Mammary epithelial cell (primary cell): ENCODE measurements at regions of chr20 and their contacts with region 1.

Region 1: DNA sequence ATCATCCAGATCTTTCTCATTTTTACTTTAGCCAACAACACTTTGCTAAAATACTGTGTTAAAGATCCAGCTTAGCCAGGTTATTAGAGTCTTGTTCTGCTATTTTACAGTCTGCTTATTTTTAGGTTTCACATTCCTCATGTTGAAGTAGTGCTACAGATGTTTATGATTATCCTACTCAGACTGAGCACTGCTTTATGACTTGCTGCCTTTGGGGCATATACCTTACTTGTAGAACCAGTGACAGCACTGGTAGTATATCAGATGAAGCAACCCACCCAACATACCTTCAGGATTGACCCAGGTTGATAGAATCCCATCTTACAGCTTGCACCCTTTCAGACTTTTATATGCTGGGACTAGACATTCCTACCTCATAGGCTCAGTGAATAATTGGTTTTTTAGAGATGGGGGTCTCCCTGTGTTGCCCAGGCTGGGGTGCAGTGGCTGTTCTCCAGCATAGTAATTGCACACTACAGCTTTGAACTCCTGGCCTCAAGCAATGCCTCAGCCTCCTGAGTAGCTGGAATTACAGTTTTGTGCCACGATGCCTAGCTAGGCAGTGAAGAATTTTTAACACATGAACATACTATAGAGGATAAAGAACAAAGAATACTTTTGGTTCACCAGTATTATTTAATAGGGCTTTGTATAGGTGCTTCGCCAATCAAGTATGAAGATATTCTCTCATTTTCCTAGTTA is 63.8 kb upstream of the DYNLRB1 start:
- DNase-seq: no peak
- H3K4me3 ChIP-seq: no peak overlapping the region
- H3K27ac ChIP-seq: no peak overlapping the region
- H3K4me1 ChIP-seq: no peaks in the 10 kb centered on the region
- H3K27me3 ChIP-seq: no peaks in the 10 kb centered on the region
- CTCF ChIP-seq: no peak

Region 2: GRCh38 chr20:34363062-34363464 is 89.4 kb before region 1 on chr20 and contains the start of gene ITCH:
- CTCF ChIA-PET with region 1: no interaction called
- dilution Hi-C with region 1: no loop called
- in situ Hi-C with region 1: no loop called
- intact Hi-C with region 1: no loop called
- DNase-seq: peak; percentile 92
- H3K4me3 ChIP-seq: peak within 1 kb of the TSS; percentile 83 to 98 (median 95)
- H3K27ac ChIP-seq: peak within 1 kb of the TSS; percentile 89
- H3K4me1 ChIP-seq: peaks cover 39% of the 10 kb centered on the region
- H3K27me3 ChIP-seq: no peaks in the 10 kb centered on the region
- CTCF ChIP-seq: no peak
- total RNA-seq, gene ITCH: 91.4 to 127 TPM

Region 3: DNA sequence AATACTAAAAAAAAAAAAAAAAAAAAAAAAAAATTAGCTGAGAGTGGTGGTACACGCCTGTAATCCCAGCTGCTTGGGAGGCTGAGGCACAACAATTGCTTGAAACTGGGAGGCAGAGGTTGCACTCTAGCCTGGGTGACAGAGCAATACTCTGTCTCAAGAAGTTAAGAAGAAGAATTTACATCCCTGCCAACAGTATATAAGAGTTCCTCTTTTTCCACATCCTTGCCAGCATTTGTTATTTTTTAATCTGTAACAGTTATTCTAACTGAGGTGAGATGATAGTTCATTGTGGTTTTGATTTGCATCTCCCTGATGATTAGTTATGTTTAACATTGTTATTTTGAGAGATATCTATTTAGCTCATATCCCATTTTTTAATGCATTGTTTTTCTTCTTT is 43.5 kb after region 1 on chr20:
- CTCF ChIA-PET with region 1: no interaction called
- dilution Hi-C with region 1: loop called (anchors 5 kb)
- in situ Hi-C with region 1: no loop called
- intact Hi-C with region 1: loop called (anchors 5 kb)
- DNase-seq: no peak
- H3K4me3 ChIP-seq: no peak overlapping the region
- H3K27ac ChIP-seq: no peak overlapping the region
- H3K4me1 ChIP-seq: peaks cover 9% of the 10 kb centered on the region
- H3K27me3 ChIP-seq: no peaks in the 10 kb centered on the region
- CTCF ChIP-seq: no peak

Region 4: GRCh38 chr20:34579191-34579978 is 127.0 kb after region 1 on chr20:
- CTCF ChIA-PET with region 1: no interaction called
- dilution Hi-C with region 1: no loop called
- in situ Hi-C with region 1: no loop called
- intact Hi-C with region 1: no loop called
- DNase-seq: peak; percentile 94
- H3K4me3 ChIP-seq: no peak overlapping the region
- H3K27ac ChIP-seq: peak overlapping the region; percentile 10
- H3K4me1 ChIP-seq: peaks cover 30% of the 10 kb centered on the region
- H3K27me3 ChIP-seq: no peaks in the 10 kb centered on the region
- CTCF ChIP-seq: peak; percentile 92

Region 5: GRCh38 chr20:34704177-34705007 is 252.0 kb after region 1 on chr20 and contains the start of gene TP53INP2:
- CTCF ChIA-PET with region 1: no interaction called
- dilution Hi-C with region 1: no loop called
- in situ Hi-C with region 1: no loop called
- intact Hi-C with region 1: no loop called
- DNase-seq: peak; percentile 69
- H3K4me3 ChIP-seq: peak within 1 kb of the TSS; percentile 49 to 78 (median 61)
- H3K27ac ChIP-seq: peak within 1 kb of the TSS; percentile 52
- H3K4me1 ChIP-seq: peaks cover 35% of the 10 kb centered on the region
- H3K27me3 ChIP-seq: no peaks in the 10 kb centered on the region
- CTCF ChIP-seq: no peak
- total RNA-seq, gene TP53INP2: 2.5 to 4.4 TPM